ENCODE measurements at regions of chr12 and their contacts with region 1.

Region 1: DNA sequence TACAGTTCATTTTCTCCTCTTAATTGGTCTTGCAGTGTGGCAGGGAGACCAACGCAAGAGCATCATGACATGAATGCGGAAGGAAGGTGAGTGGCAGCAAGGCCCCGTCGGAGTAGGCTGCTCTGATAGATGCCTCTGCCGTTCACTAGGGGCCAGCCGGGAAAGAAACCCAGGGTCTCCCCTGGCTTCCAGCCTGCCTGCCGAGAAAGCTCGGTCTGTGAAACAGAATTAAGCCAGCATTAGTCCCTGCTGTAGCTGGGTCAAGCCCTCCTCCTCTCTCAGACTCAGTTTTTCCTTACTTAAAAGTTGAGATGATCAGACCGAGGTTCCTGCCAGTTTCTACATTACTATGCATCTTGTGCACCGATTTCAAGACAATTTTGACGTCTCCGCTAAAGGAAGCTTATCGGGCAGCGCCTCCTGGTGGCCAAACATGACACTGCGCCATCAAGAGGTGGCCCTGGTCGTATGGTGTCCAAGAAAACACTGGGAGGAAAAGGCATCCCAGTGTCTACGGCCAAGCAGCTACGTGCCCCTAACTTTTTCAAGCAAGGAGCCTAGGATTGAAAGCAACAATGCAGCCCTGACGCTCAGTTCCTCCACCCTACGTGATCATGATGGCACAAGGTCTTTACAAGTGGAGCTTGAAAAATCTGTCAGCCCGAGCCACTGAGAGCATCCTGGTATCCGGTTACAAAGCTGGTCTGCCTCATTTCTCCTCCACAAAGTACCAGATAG is 131.6 kb downstream of the KSR2 start:
- DNase-seq: peak; percentile 92
- ATAC-seq: peak; percentile 88
- H3K4me3 Mint-ChIP-seq: 0 out of 2 replicates have a peak overlapping the region, but pooled peaks have one; percentile 14
- H3K27ac Mint-ChIP-seq: no peak overlapping the region; the same call in 1 of the 2 replicates
- H3K4me1 Mint-ChIP-seq: peaks cover 27% of the 10 kb centered on the region
- H3K27me3 Mint-ChIP-seq: no peaks in the 10 kb centered on the region
- CTCF ChIP-seq: peak; percentile 99

Region 2: DNA sequence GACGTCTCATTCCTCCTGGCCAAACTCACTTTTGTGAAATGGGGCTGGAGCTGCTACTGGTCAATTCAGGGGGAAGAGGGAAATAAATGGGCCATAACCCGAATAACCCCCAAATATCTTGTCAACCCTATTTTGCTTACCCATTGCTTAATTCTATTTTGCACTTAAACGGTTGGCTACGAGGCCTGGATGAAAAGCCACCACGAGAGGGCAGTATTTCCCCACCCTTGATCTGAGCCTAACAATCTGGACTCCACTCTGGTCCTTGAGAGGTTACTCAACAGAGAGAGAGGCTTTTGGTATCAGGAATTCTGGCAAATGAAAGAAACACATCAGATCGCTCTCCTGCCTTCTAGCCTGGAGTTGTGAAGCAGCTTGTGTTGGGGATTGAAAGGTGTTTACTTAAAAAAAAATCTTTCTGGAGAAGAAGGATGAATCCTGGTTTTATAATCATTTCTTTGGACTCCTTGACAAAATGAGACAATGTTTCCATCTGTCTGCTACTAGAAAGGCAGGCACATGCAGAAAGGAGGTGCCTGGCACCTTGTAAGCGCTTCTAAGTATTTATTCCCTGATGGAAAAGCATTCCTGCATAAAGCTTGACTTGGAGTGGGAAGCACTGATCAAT is 624.5 kb before region 1 on chr12:
- CTCF ChIA-PET with region 1: interaction called, 12 read pairs
- POLR2A ChIA-PET with region 1: no interaction called
- DNase-seq: peak; percentile 80
- ATAC-seq: peak; percentile 84
- H3K4me3 Mint-ChIP-seq: no peak overlapping the region
- H3K27ac Mint-ChIP-seq: 0 out of 2 replicates have a peak overlapping the region, but pooled peaks have one; percentile 11
- H3K4me1 Mint-ChIP-seq: peaks cover 13% of the 10 kb centered on the region
- H3K27me3 Mint-ChIP-seq: no peaks in the 10 kb centered on the region; the same call in 1 of the 2 replicates
- CTCF ChIP-seq: peak; percentile 70

Region 3: DNA sequence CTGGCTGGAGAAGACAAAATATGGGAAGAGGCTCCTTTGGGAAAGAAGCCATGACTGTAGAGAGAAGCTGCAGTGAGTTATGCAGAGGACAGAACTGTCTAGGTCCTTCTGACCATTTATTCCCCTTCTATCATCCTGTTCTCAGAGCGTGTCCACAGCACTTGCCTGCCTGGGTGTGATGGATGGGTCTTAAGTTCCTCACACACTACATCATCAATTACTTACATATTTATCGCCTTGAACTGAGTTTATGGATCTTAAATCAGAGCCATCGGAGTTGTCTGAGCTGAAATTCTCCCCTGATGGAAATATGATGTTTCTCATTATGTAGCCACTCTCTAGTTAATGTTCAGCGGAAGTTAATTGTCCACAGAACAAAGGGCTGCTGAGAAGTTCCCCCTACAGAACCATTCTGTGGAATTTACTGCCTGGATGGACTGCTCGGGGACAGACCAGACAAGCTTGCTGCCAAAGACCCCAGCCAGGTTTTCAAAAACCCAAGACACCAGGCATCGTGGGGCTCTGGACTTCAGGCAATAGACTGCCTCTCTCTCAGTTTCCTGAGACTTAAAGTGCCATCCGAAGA is 243.3 kb before region 1 on chr12:
- CTCF ChIA-PET with region 1: interaction called, 16 read pairs
- POLR2A ChIA-PET with region 1: no interaction called
- DNase-seq: no peak
- ATAC-seq: no peak
- H3K4me3 Mint-ChIP-seq: no peak overlapping the region
- H3K27ac Mint-ChIP-seq: no peak overlapping the region
- H3K4me1 Mint-ChIP-seq: peaks cover 23% of the 10 kb centered on the region
- H3K27me3 Mint-ChIP-seq: no peaks in the 10 kb centered on the region
- CTCF ChIP-seq: no peak

Region 4: DNA sequence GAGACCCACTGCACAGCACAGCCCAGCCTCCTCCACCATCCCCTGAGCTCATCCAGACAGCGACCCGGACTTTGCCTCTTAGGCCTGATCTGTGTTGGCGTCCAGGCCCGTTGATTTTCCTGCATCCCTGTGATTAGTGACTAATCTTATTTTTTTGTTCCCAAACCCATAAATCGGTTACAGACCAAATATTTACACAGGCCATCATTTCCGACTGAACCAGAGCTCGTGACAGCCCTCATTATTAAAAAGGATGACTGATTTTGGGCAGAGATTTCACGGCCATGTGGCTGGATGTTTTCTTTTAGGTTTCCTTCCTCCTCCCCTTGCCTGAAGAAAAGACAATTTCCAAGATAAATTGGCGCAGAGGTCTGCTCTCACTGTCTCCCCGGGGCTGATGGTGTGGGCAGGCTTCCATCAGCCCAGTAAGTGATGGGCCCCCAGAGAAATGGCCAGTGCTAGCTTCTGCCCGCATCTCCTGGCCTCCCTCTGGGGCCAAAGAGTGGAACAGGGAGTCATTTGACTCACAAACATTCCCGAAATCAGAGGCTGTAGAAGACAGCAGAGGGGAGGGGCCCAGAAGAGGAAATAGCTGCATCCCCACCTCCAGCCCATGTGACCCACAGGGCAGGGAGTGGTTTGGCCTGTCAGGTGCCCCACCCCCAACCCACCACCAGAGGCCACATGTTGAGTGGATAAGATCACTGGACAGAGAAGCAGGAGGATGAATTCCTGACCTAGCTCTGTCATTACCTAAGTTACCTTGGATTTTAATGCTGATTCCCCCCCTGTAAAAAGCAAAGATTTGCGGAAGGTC is 151.8 kb before region 1 on chr12:
- CTCF ChIA-PET with region 1: interaction called, 29 read pairs
- POLR2A ChIA-PET with region 1: no interaction called
- DNase-seq: peak; percentile 85
- ATAC-seq: peak; percentile 100
- H3K4me3 Mint-ChIP-seq: peak overlapping the region; percentile 43
- H3K27ac Mint-ChIP-seq: peak overlapping the region; percentile 98
- H3K4me1 Mint-ChIP-seq: peaks cover 20% of the 10 kb centered on the region
- H3K27me3 Mint-ChIP-seq: no peaks in the 10 kb centered on the region
- CTCF ChIP-seq: no peak

Region 5: DNA sequence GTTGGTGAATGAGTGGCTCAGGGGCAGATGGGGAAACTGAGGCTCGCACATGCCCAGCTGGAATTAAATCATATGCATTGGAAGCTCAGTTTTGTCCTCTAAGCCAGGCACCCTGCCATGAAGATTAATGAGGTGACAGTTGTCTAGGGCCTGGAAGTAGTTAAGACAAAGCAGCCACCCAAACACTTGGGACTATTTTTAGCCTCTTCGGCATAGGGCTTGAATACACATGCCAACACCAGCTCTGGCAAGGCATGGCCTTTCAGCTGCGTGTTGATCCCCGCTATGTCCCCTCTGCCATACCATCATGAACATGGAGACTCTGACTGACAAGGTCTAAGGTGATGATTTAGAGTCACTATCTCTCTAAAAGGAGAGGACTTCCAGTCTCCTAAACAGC is 118.6 kb before region 1 on chr12:
- CTCF ChIA-PET with region 1: interaction called, 13 read pairs
- POLR2A ChIA-PET with region 1: no interaction called
- DNase-seq: no peak
- ATAC-seq: no peak
- H3K4me3 Mint-ChIP-seq: no peak overlapping the region
- H3K27ac Mint-ChIP-seq: no peak overlapping the region
- H3K4me1 Mint-ChIP-seq: peaks cover 10% of the 10 kb centered on the region
- H3K27me3 Mint-ChIP-seq: no peaks in the 10 kb centered on the region
- CTCF ChIP-seq: no peak

Region 6: DNA sequence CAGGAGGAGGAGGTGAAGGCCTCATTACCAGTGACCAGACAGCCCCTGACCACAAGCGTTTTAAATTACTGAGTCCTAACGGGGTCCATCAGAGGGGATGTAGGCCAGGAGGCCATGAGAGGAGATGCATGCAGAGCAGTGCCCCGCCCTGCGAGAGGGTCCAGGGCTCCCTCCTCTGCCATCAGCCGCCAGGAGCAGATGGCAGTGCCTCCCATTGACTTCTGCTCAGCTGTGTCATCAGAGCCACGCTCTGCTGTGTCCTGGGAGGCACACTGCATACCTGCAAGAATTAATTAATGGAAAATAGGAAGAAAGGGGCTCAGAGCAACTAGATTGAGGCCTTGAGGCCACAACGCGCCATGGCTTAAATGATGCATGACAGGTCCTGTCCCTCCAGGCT is 104.4 kb before region 1 on chr12:
- CTCF ChIA-PET with region 1: no interaction called
- POLR2A ChIA-PET with region 1: no interaction called
- DNase-seq: no peak
- ATAC-seq: no peak
- H3K4me3 Mint-ChIP-seq: no peak overlapping the region
- H3K27ac Mint-ChIP-seq: no peak overlapping the region
- H3K4me1 Mint-ChIP-seq: peaks cover under 1% of the 10 kb centered on the region
- H3K27me3 Mint-ChIP-seq: no peaks in the 10 kb centered on the region; the same call in 1 of the 2 replicates
- CTCF ChIP-seq: no peak

Region 7: DNA sequence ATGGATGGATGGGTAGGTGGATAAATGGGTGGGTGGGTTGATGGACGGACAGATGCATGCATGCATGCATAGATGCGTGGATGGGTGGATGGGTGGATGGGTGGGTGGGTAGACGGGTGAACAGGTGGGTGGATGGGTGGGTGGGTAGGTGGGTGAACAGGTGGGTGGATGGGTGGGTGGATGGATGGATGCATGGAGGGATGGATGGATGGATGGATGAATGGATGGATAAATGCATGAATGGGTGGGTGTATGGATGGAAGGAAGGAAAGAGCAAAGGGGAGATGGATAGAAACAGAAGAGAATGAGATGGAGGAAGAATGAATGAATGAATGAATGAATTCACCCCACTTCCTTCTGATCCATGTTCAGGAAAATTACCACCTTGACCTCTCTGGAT is 11.3 kb before region 1 on chr12:
- CTCF ChIA-PET with region 1: interaction called, 12 read pairs
- POLR2A ChIA-PET with region 1: no interaction called
- DNase-seq: no peak
- ATAC-seq: no peak
- H3K4me3 Mint-ChIP-seq: no peak overlapping the region
- H3K27ac Mint-ChIP-seq: no peak overlapping the region
- H3K4me1 Mint-ChIP-seq: peaks cover 6% of the 10 kb centered on the region
- H3K27me3 Mint-ChIP-seq: no peaks in the 10 kb centered on the region; the same call in 1 of the 2 replicates
- CTCF ChIP-seq: no peak

Region 8: DNA sequence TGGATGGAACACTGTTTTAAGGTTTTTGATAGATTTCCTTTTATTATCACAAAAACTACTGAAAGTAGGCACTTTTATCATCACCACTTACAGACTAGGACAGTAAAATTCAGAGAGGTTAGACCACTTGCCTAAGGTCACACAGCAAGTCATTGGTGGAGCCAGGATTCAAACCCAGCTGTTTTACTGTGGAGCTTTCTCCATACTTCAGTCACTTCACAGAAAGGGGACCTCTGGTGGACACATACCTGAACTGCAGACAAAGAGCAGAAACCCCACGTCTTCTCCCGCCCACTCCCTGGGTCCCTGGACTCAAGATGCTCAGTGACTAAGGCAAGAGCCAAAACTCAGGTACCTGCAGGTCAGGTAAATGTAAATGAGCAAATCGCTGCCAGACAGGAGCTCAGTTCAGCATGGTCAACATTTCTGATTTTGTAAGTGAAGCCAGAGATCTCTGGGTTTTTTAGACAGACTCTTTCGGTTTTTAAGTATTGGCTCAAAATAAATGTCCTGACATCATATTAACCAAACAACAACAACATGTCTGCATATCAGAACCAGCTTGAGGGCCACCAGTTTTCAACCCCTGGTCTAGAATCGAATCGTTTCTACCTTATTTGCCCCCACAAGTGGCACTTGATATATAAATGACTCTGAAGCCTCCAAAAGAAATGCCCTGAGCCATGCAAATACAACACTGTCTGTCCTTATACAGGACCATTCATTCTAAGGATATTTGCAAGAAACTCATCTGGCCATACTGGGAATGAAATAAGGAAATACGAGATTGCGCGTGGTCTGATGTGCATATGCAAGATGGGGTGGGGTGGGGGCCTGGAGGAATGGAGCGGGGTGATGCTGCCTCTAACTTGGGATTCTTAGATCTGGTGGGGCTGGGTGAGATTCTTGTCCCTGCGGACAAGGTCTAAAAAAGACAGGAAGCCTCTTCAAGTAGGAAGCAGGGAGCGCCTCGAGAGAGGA is 20.8 kb after region 1 on chr12:
- CTCF ChIA-PET with region 1: interaction called, 72 read pairs
- POLR2A ChIA-PET with region 1: no interaction called
- DNase-seq: peak; percentile 83
- ATAC-seq: peak; percentile 64
- H3K4me3 Mint-ChIP-seq: no peak overlapping the region
- H3K27ac Mint-ChIP-seq: no peak overlapping the region
- H3K4me1 Mint-ChIP-seq: 0 out of 2 replicates have a peak, but pooled peaks cover 2% of the 10 kb centered on the region
- H3K27me3 Mint-ChIP-seq: no peaks in the 10 kb centered on the region
- CTCF ChIP-seq: peak; percentile 80

Measured in WTC11 (cell line).